ENCODE measurements at regions of chr1 and their contacts with region 1.

Region 1: DNA sequence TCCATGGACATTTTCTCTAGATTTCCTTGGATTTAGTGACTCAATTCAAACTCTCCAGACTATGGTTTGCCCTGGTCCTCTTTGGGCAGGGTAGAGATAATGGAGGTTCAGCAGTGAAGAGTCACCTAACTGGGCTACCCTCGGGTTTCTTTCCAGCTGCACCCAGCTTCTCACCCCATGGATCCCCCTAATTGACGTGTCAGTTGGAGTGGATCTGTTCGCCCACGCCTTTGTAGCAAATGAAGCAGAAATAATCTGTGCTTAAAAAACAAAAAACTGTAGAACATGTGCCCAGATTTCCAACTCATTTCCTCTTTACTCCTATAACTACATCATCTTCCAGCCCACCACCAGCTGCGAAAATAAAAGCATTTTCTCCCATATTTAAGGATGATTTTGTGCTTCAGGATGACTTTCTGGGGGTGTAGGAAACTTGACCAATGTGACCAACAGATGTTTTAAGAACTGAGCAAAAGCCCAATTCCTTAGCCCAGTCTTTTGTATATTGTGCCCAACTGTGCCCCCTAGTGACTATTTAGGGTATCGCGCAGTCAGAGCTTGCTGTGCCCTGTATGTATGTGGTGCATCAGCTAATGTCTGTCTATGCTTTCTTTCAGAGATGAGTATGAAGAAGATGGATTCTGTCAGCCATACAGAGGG is 66.5 kb upstream of the UBE2U start:
- DNase-seq: peak; percentile 31
- ATAC-seq: peak; percentile 91
- H3K4me3 ChIP-seq: no peak overlapping the region
- H3K27ac ChIP-seq: no peak overlapping the region
- H3K4me1 ChIP-seq: no peaks in the 10 kb centered on the region
- H3K27me3 ChIP-seq: no peaks in the 10 kb centered on the region
- CTCF ChIP-seq: peak; percentile 84 to 94 (median 87); a peak in 5 of 6 replicates
- EP300 ChIP-seq: no peak
- POLR2A ChIP-seq: no peak
- RAD21 ChIP-seq: peak; percentile 79

Region 2: DNA sequence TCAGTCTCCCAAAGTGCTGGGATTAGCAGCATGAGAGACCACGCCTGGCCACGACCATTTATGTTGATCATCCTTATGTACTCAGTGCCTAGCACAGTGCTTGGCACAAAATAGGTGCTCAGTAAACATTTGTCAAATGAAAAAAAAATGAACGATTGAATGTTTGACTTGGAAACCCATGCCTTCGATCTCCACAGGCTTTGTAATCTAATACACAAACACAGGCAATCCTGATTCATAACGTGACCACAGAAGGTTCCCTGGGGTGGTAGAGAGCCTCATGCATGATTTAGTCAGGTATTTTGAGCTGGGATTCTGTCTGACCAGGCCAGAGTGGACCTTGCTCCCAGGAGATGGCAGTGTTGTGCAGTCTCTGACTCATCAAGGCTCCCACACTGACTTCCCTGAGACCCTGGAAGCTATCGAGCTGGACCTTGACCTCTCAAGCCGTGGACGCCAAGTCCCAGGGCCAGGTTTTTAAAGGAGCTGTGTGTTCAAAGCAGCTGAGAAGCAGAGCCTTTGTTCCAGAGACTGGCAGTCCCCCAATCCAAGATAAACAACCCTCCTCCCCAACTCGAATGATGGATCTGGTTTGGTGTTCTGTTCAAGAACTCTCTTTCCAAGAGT is 462.5 kb before region 1 on chr1:
- CTCF ChIA-PET with region 1: interaction called, 7 read pairs
- POLR2A ChIA-PET with region 1: no interaction called
- RAD21 ChIA-PET with region 1: interaction called, 5 read pairs
- SMC1A ChIA-PET with region 1: interaction called, 4 read pairs
- in situ Hi-C with region 1: no loop called
- intact Hi-C with region 1: loop called (anchors 5 kb)
- DNase-seq: no peak
- ATAC-seq: peak; percentile 94
- H3K4me3 ChIP-seq: no peak overlapping the region
- H3K27ac ChIP-seq: no peak overlapping the region
- H3K4me1 ChIP-seq: no peaks in the 10 kb centered on the region
- H3K27me3 ChIP-seq: no peaks in the 10 kb centered on the region
- CTCF ChIP-seq: peak; percentile 42 to 60 (median 42); a peak in 5 of 6 replicates
- EP300 ChIP-seq: no peak
- POLR2A ChIP-seq: no peak
- RAD21 ChIP-seq: peak; percentile 50

Region 3: DNA sequence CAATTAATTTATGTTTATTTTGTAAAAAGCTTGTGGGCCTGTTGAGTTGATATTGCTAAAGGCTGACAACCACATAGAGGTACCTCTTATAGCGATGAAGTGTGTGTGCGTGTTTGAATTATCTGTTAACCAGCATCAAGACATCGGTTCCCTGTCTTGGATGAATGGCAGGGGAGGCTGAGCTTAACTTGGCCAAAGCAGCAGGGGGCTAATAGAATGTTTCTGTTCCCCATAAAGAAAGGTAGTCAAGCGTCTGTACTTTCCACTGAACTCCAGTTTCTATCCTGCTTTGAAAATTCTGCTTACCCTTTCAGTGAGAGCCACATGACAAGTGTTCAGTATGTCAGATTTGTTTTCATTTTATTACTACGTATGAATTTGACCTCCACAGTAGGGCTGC is 300.1 kb before region 1 on chr1:
- CTCF ChIA-PET with region 1: no interaction called
- POLR2A ChIA-PET with region 1: no interaction called
- RAD21 ChIA-PET with region 1: no interaction called
- SMC1A ChIA-PET with region 1: no interaction called
- in situ Hi-C with region 1: no loop called
- intact Hi-C with region 1: no loop called
- DNase-seq: no peak
- ATAC-seq: peak; percentile 60
- H3K4me3 ChIP-seq: no peak overlapping the region
- H3K27ac ChIP-seq: no peak overlapping the region
- H3K4me1 ChIP-seq: no peaks in the 10 kb centered on the region
- H3K27me3 ChIP-seq: no peaks in the 10 kb centered on the region
- CTCF ChIP-seq: no peak
- EP300 ChIP-seq: no peak
- POLR2A ChIP-seq: no peak
- RAD21 ChIP-seq: no peak

Region 4: DNA sequence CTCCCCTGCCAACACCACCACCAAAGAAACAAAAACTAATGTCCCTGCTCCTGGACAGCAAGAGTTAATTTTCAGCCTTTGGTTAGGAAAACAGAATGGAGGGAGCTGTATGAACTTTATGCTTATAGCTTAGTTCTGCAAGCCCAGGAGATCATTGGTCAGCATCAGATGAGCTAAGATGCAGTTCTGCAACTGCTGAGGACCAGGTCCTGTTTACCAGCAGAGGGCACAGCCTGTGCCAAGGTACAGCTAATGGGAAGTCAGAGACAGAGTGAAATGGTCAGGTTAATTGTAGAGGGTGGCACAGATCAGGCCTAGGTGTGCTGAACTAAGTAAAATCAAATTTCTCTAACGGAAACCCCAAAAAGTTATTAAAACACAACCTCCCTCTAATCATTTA is 201.7 kb before region 1 on chr1:
- CTCF ChIA-PET with region 1: interaction called, 14 read pairs
- POLR2A ChIA-PET with region 1: no interaction called
- RAD21 ChIA-PET with region 1: interaction called, 8 read pairs
- SMC1A ChIA-PET with region 1: interaction called, 8 read pairs
- in situ Hi-C with region 1: no loop called
- intact Hi-C with region 1: no loop called
- DNase-seq: no peak
- ATAC-seq: peak; percentile 60
- H3K4me3 ChIP-seq: no peak overlapping the region
- H3K27ac ChIP-seq: no peak overlapping the region
- H3K4me1 ChIP-seq: no peaks in the 10 kb centered on the region
- H3K27me3 ChIP-seq: no peaks in the 10 kb centered on the region
- CTCF ChIP-seq: peak in 2 of 3 experiments; percentile 14 to 20; a peak in 2 of 6 replicates
- EP300 ChIP-seq: no peak
- POLR2A ChIP-seq: no peak
- RAD21 ChIP-seq: no peak

Region 5: DNA sequence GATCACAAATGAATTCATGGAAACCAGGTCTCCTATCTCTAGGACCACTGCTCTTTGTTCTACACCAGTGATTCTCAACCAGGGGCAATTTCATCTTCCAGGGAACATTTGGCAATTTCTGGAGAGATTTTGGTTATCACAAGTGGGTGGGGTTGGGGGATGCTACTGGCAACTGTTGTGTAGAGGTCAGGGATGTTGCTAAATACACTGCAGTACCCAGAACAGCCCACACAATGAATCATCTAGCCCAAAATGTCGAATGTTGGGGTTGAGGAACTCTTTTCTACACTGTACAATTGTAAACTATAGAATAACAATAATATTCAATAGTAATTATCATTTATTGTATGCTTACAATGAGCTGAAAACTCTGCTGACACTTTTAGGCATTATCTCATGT is 10.9 kb after region 1 on chr1:
- CTCF ChIA-PET with region 1: interaction called, 19 read pairs
- POLR2A ChIA-PET with region 1: no interaction called
- RAD21 ChIA-PET with region 1: interaction called, 5 read pairs
- SMC1A ChIA-PET with region 1: interaction called, 12 read pairs
- in situ Hi-C with region 1: no loop called
- intact Hi-C with region 1: no loop called
- DNase-seq: no peak
- ATAC-seq: no peak
- H3K4me3 ChIP-seq: no peak overlapping the region
- H3K27ac ChIP-seq: no peak overlapping the region
- H3K4me1 ChIP-seq: no peaks in the 10 kb centered on the region
- H3K27me3 ChIP-seq: no peaks in the 10 kb centered on the region
- CTCF ChIP-seq: no peak
- EP300 ChIP-seq: no peak
- POLR2A ChIP-seq: no peak
- RAD21 ChIP-seq: no peak

Region 6: GRCh38 chr1:64194168-64195080 is 57.5 kb after region 1 on chr1:
- CTCF ChIA-PET with region 1: interaction called, 15 read pairs
- POLR2A ChIA-PET with region 1: no interaction called
- RAD21 ChIA-PET with region 1: interaction called, 4 read pairs
- SMC1A ChIA-PET with region 1: interaction called, 3 read pairs
- in situ Hi-C with region 1: no loop called
- intact Hi-C with region 1: no loop called
- DNase-seq: no peak
- ATAC-seq: peak; percentile 85
- H3K4me3 ChIP-seq: no peak overlapping the region
- H3K27ac ChIP-seq: no peak overlapping the region
- H3K4me1 ChIP-seq: no peaks in the 10 kb centered on the region
- H3K27me3 ChIP-seq: no peaks in the 10 kb centered on the region
- CTCF ChIP-seq: no peak
- EP300 ChIP-seq: peak in 1 of 2 experiments; percentile 35; a peak in 2 of 4 replicates
- POLR2A ChIP-seq: no peak
- RAD21 ChIP-seq: no peak